ENCODE measurements at regions of chr5 and their contacts with region 1.

Region 1: DNA sequence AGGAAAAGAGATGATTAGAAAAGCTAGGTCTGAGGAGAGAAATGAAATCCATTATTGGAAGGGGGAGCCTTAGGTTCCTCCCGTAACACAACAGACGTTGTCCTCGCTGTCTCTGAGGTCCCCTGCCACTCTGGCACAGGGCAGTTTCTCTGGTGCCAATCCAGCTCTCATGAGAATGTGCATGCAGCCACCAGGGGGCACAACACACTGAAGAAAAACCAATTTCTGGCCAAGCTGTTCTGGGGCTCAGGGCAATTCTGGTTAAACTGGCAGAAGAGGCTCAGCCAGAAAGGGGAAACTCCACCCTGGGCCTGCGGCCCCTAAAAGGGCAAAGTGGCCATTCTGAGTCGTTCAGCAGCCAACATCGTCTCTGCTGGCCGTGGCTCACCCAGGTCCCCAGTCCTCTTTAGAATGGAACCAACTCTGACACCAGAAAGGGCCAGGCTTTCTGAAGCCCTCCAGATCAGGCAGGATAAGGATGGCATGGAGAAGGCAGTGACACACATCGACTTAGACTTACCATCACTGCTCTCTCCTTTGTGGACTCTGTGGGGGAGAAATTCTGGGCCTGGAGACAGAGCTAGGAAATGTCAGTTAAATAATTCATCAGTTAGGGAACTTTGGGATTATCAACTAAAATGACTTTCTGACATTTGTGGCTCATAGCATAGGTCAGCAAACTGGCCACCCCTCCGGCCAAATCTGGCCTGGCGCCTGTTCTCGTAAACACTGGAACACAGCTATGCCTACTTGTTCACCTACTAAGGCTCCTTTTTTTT is 58.5 kb upstream of the GOLPH3 start:
- DNase-seq: peak; percentile 64
- ATAC-seq: peak; percentile 23
- H3K4me3 ChIP-seq: no peak overlapping the region
- H3K27ac ChIP-seq: peak overlapping the region; percentile 97
- H3K4me1 ChIP-seq: peaks cover 56% of the 10 kb centered on the region
- H3K27me3 ChIP-seq: no peaks in the 10 kb centered on the region
- CTCF ChIP-seq: peak; percentile 87
- EP300 ChIP-seq: no peak
- POLR2A ChIP-seq: no peak
- RAD21 ChIP-seq: peak; percentile 88

Region 2: DNA sequence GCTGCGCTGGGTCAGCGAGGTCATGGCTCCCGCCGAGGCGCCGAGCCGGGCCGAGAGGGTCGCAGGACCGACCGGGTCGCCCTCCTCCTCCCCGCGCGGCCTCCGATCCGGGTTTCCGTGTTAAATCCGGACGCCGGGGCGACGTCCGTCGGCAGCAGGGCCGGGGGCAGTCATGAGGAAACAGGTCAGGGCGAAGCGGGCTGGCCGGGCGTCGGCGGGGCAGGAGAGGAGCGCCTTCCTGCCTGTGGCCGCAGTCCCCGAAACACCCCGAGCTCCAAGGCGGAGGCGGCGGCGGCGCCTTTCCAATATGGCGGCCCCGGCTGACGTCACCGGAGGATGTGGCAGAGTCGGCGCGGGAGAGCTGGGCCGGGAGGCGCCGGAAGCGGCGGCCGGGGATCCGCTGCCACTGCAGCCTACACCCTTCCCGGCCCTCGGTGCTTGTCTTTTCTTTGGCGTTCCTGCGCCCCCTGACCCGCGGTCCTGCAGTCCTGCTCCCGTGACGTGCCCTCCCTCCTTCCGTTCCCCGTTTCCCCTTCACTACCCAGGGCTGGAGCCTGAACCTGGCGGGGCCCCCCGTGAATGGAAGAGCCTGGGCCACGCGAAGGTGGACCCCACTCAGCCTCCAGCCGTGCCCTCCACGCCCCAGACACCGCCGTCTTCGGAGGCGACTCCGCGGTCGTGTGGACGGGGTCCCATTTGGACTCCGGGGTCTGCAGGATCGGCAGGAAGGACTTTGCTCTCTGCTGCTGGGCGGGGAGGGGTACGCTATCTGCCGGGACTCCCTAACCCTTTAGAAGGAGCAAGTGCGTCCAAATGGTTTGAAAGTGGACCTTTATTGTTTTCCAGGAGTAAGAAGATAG is 58.4 kb before region 1 on chr5 and contains the start of gene GOLPH3:
- CTCF ChIA-PET with region 1: no interaction called
- POLR2A ChIA-PET with region 1: interaction called, 24 read pairs
- in situ Hi-C with region 1: no loop called
- intact Hi-C with region 1: loop called (anchors 1 kb)
- DNase-seq: peak; percentile 81
- ATAC-seq: peak; percentile 94
- H3K4me3 ChIP-seq: peak within 1 kb of the TSS; percentile 85 to 90 (median 87)
- H3K27ac ChIP-seq: peak within 1 kb of the TSS; percentile 99
- H3K4me1 ChIP-seq: peaks cover 39% of the 10 kb centered on the region
- H3K27me3 ChIP-seq: no peaks in the 10 kb centered on the region; a peak in 1 of 5 replicates
- CTCF ChIP-seq: no peak; the same call in none of the 2 replicates
- EP300 ChIP-seq: no peak; a peak in 1 of 4 replicates
- POLR2A ChIP-seq: peak; percentile 86 to 90
- RAD21 ChIP-seq: peak; percentile 36; the same call in 1 of the 2 replicates
- total RNA-seq, gene GOLPH3: 84.5 and 102 TPM in 2 replicates

Region 3: GRCh38 chr5:32202394-32202793 is 30.2 kb before region 1 on chr5:
- CTCF ChIA-PET with region 1: no interaction called
- POLR2A ChIA-PET with region 1: no interaction called
- in situ Hi-C with region 1: no loop called
- intact Hi-C with region 1: no loop called
- DNase-seq: no peak
- ATAC-seq: no peak
- H3K4me3 ChIP-seq: no peak overlapping the region
- H3K27ac ChIP-seq: no peak overlapping the region
- H3K4me1 ChIP-seq: peaks cover 48% of the 10 kb centered on the region
- H3K27me3 ChIP-seq: no peaks in the 10 kb centered on the region
- CTCF ChIP-seq: no peak
- EP300 ChIP-seq: no peak
- POLR2A ChIP-seq: no peak
- RAD21 ChIP-seq: no peak

Region 4: DNA sequence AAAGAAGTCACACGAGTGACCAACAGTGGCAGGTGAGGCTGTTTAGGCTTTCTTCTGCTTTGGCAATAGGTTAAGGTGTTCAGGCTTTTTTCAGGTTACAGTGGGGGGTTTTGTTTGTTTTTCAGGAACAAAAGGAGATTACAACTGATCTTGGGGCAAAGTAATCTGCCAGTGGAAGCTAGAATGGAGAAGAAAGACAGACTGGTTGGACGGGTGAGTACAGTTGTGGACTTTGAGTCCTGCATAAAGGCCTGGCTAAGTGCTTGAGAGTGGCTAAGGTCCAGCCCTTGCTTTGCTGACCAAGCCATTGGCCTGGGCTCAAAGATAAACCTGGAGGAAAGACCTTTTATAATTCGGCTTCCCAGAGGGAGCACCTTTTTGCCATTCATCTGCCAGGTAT is 17.0 kb after region 1 on chr5:
- CTCF ChIA-PET with region 1: no interaction called
- POLR2A ChIA-PET with region 1: interaction called, 16 read pairs
- in situ Hi-C with region 1: no loop called
- intact Hi-C with region 1: no loop called
- DNase-seq: peak; percentile 36
- ATAC-seq: peak; percentile 92
- H3K4me3 ChIP-seq: no peak overlapping the region
- H3K27ac ChIP-seq: peak overlapping the region; percentile 55
- H3K4me1 ChIP-seq: peaks cover 40% of the 10 kb centered on the region
- H3K27me3 ChIP-seq: no peaks in the 10 kb centered on the region
- CTCF ChIP-seq: no peak
- EP300 ChIP-seq: no peak
- POLR2A ChIP-seq: no peak
- RAD21 ChIP-seq: no peak

Region 5: DNA sequence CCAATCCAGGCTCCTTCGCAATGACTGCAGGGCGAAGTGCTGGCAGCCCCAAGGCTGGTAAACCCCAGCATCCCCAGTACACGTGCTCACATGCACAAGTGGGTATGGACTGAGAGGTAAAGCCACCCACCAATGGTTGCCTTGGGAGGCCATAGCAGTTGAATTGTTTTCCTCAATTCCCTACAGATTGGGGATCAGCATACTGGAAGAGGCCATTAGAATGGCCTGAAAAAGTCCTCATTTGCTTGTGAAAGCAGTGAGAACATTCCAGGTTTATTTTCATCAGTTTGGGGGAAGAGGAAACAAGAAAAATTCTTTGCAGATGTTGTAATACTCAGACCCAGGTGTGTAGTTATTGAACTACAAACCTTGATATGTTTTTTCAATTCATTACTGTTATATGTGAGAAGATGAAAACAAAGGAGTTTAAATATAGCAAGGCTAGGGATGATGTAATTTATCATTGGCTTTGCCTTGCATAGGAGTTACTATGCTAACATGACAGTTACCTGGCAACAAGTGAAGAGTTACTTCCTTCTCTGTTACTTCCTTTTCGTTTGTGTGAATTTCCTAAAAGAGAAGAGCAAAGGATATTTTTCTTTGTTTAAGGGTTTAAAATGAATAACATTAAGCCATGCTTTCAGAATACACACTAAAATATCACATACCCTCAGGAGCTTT is 43.7 kb after region 1 on chr5:
- CTCF ChIA-PET with region 1: no interaction called
- POLR2A ChIA-PET with region 1: interaction called, 40 read pairs
- in situ Hi-C with region 1: no loop called
- intact Hi-C with region 1: loop called (anchors 2 kb)
- DNase-seq: peak; percentile 23
- ATAC-seq: no peak
- H3K4me3 ChIP-seq: no peak overlapping the region
- H3K27ac ChIP-seq: peak overlapping the region; percentile 67
- H3K4me1 ChIP-seq: peaks cover 93% of the 10 kb centered on the region
- H3K27me3 ChIP-seq: no peaks in the 10 kb centered on the region
- CTCF ChIP-seq: no peak
- EP300 ChIP-seq: no peak
- POLR2A ChIP-seq: no peak
- RAD21 ChIP-seq: no peak

Region 6: DNA sequence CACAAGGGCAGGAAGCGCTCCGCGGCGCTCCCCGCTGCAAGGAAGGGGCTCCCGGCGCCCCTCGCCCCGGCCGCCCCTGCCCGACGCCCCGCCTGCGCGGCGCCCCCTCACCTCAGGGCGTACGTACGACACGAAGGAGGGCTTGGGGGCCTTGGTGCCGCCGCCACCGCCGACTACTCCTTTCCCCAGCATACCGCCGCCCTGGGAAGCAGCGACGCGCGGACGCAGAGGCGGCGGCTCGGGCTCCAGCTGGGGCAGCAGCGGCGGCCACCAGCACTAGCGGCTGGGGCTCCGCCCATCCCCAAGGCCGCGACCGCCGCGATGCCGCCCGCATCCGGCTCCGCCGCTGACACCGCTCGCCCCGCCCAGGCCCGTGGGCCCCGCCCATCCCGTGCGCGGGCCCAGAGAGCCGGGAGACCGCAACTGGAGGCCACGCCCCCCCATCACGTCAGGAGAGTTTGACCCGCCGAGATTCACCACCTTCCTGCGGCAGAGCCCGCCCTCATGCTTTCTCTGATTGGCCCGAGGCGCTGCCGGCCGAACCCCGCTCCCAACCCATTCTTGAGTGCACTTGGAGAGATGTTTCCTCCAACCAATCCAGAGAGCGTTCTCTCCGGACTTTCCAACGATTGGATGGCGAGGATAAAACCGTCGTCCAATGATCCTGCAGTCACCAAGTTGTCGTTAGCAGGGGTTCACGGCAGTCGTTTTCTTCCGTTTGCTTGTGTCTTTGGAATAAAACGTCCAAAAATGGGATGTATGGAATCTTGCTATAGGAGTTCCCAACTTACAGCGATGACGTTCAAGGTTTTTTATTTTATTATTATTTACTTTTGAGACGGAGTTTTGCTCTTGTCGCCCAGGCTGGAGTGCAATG is 80.3 kb after region 1 on chr5 and contains the start of gene MTMR12:
- CTCF ChIA-PET with region 1: no interaction called
- POLR2A ChIA-PET with region 1: interaction called, 28 read pairs
- in situ Hi-C with region 1: loop called (anchors 5 kb)
- intact Hi-C with region 1: loop called (anchors 2 kb)
- DNase-seq: peak; percentile 98
- ATAC-seq: peak; percentile 94
- H3K4me3 ChIP-seq: peak within 1 kb of the TSS; percentile 84 to 95 (median 92)
- H3K27ac ChIP-seq: peak within 1 kb of the TSS; percentile 95
- H3K4me1 ChIP-seq: peaks cover 73% of the 10 kb centered on the region
- H3K27me3 ChIP-seq: no peaks in the 10 kb centered on the region
- CTCF ChIP-seq: no peak
- EP300 ChIP-seq: peak in 1 of 2 experiments; percentile 9; a peak in 1 of 4 replicates
- POLR2A ChIP-seq: peak; percentile 77 to 78
- RAD21 ChIP-seq: peak; percentile 64
- total RNA-seq, gene MTMR12: 36.6 and 56.5 TPM in 2 replicates

Region 7: DNA sequence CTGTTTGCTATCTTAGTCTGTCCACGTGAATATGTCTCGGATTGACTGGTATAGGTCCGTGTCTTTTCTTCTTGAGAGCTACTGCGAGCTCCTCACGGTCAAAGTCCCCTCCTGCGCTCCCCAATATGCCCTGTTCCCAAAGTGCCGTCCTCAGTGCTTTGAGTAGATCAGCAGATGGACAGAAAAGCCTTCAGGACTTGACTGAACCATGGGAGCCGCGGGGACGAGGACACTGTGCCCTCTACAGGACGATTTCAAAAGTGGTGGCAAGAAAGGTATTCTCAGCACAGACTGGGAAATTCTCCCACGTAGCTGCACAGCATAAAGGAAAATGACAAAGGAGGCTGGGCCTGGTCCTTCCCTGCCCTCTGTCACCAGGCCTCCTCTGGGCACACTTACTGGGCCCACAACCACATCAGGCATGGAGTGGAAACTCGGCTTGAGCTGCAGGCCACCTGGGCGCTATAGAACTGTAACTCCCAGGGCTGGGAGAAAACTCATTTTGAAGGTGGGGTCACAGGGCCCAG is 96.7 kb after region 1 on chr5:
- CTCF ChIA-PET with region 1: interaction called, 19 read pairs
- POLR2A ChIA-PET with region 1: interaction called, 78 read pairs
- in situ Hi-C with region 1: no loop called
- intact Hi-C with region 1: loop called (anchors 1 kb)
- DNase-seq: peak; percentile 73
- ATAC-seq: peak; percentile 78
- H3K4me3 ChIP-seq: no peak overlapping the region
- H3K27ac ChIP-seq: peak overlapping the region; percentile 95
- H3K4me1 ChIP-seq: peaks cover 66% of the 10 kb centered on the region
- H3K27me3 ChIP-seq: no peaks in the 10 kb centered on the region
- CTCF ChIP-seq: peak; percentile 94
- EP300 ChIP-seq: no peak
- POLR2A ChIP-seq: no peak
- RAD21 ChIP-seq: peak; percentile 83

Measured in HepG2 (cell line).